Right ventricle myocardium superior (tissue), 1 donor: ENCODE measurements at regions of chr4 and their contacts with region 1.

Region 1: GRCh38 chr4:173257732-173258717 is 76.1 kb downstream of the HMGB2 start:
- DNase-seq: peak; percentile 60
- ATAC-seq: peak; percentile 94

Region 2: GRCh38 chr4:173013232-173013930 is 244.6 kb before region 1 on chr4:
- intact Hi-C with region 1: loop called (anchors 5 kb)
- DNase-seq: no peak
- ATAC-seq: peak; percentile 79

Region 3: GRCh38 chr4:173025131-173025530 is 232.9 kb before region 1 on chr4:
- intact Hi-C with region 1: loop called (anchors 5 kb)
- DNase-seq: no peak
- ATAC-seq: peak; percentile 87